ENCODE measurements at regions of chr10 and their contacts with region 1.

Region 1: DNA sequence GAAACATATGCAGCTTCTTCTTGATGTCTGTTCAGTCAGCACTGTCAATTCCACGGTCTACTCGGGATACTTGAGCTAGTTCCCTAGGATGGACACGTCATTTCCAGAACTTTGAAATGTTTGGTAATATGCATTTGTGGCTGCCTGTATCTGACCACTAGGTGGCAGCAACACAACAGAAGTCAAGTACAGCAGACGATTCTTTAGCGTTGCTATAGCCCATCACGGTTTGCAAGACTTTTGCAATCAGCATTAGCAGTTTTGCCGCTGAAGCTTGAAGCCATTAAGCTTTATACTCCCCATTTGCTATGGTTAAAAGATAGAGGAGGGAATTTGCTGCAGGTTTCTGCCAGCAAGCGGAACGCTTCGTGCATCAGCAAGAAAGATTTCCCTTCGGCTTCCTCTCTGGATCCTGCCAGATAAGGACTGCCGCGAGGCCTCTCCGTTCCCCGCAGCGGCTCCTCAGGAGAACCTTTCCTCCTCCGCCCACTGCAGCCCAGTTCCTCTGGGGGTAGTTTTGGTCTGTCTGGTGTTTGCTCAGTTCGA is 63.5 kb downstream of the ABCC2 start:
- DNase-seq: peak; percentile 93
- H3K4me3 ChIP-seq: peak overlapping the region; percentile 34; the same call in 1 of the 2 replicates
- H3K27ac ChIP-seq: peak overlapping the region; percentile 22
- H3K27me3 ChIP-seq: no peaks in the 10 kb centered on the region
- CTCF ChIP-seq: peak; percentile 95

Region 2: DNA sequence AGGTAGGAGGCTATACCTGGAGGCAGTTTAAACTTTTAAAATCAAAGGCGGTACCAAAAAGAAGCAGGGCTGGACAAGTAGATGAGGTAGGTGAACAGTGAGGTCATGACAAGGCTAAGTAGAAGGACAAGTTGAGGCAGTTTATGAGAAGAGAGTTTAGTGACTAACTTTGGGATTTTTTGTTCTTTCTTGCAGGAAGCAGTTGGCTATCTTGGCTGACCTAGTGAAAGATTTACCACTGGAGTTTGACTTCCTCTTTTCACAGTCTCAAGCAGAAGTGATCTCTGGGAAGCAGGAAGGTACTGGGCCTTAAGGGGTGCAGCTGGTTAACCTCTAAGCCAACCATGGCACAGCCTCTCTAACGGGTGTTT is 160.3 kb before region 1 on chr10:
- CTCF ChIA-PET with region 1: no interaction called
- POLR2A ChIA-PET with region 1: no interaction called
- DNase-seq: no peak
- H3K4me3 ChIP-seq: no peak overlapping the region
- H3K27ac ChIP-seq: no peak overlapping the region
- H3K27me3 ChIP-seq: no peaks in the 10 kb centered on the region
- CTCF ChIP-seq: no peak

Region 3: DNA sequence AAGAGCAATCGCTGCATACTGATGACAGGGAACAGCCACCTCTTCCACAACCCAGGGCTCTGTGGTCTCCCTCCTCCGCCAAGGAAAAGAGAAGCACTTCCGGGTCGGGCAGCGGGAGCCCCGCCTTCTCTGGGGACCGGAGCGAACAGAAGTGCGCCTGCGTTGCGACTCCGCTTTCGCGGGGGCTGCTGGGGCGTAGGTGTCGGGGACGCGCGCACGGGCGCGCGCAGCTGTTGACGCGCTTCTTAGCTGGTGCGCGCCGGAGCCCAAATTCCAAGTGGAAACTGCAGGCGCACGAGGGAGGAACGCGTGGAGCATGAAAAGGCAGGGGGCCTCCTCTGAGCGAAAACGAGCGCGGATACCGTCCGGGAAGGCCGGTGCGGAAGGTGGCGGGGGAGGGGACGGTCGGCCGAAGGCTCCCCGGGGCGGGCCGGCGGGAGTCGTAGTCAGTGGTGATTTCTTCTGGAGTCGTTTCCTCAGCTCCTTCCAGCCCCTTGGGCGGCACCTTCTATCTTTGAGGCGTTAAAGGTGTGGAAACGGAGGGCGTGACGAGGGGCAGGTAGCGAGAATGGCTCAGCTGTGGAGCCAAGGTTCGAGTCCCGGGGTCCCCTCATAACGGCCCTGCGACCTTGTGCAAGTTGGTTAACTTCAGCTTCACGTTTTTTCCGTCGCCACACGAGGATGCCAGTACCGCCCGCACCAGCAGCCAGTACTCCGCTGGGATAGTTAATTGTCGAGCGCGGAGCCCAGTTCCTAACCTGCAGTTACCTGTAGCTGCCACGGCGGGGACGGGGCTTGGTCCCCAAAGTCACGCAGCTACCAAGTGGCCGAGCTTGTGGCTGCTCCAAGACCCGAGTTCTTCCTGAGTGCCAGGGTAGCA is 113.6 kb before region 1 on chr10 and contains the starts of genes COX15 and CUTC:
- CTCF ChIA-PET with region 1: interaction called, 20 read pairs
- POLR2A ChIA-PET with region 1: interaction called, 3 read pairs
- DNase-seq: peak; percentile 93
- H3K4me3 ChIP-seq: peak within 1 kb of the TSS; percentile 98
- H3K27ac ChIP-seq: peak within 1 kb of the TSS; percentile 91
- H3K27me3 ChIP-seq: no peaks in the 10 kb centered on the region
- CTCF ChIP-seq: peak; percentile 34; the same call in 1 of the 2 replicates
- polyA plus RNA-seq, gene COX15: 26.1 and 32.2 TPM in 2 replicates
- polyA plus RNA-seq, gene CUTC: 13.9 and 18.0 TPM in 2 replicates

Region 4: DNA sequence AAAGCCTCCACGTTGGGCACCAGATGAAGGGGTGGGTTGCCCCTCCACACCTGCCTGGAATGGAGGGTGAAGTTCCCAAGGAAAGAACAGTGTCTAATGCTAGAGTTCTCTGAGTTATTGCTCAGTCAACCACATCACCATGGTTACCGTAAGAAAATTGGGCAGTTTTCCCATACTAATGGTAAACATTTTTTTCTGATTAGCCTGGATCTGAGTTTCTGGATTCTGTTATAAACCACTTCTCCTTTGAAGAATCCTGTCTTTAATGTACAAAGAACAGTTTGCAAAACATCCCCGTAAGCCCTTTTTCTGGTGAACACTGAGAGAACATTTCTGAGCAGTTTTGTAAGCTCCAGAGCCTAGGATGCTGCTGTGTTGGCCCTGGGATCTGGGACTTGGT is 18.0 kb before region 1 on chr10:
- CTCF ChIA-PET with region 1: interaction called, 22 read pairs
- POLR2A ChIA-PET with region 1: no interaction called
- DNase-seq: no peak
- H3K4me3 ChIP-seq: no peak overlapping the region
- H3K27ac ChIP-seq: no peak overlapping the region
- H3K27me3 ChIP-seq: no peaks in the 10 kb centered on the region
- CTCF ChIP-seq: no peak

Region 5: GRCh38 chr10:99966306-99966705 is 120.4 kb after region 1 on chr10:
- CTCF ChIA-PET with region 1: interaction called, 51 read pairs
- POLR2A ChIA-PET with region 1: interaction called, 4 read pairs
- DNase-seq: no peak
- H3K4me3 ChIP-seq: no peak overlapping the region
- H3K27ac ChIP-seq: no peak overlapping the region
- H3K27me3 ChIP-seq: no peaks in the 10 kb centered on the region
- CTCF ChIP-seq: no peak

Region 6: DNA sequence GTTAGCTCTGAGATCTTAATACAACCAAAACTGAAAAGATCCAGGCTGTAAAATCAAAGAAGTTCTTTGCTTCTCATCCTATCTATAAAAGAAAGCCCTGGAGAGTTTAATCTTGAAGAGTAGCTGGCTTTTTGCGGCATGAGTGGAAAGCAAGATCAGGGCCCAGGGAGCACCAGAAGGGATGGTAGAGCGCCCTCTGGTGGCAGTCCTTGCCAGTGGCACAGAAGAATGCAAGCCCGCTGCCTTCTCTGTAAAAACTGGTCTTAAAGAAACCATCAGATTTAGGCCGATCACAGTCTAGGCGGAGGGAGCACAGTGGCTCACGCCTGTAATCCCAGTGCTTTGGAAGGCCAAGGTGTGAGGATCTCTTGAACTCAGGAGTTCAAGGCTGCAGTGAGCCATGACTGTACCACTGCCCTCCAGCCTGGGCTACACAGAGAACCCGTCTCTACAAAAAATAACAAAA is 200.1 kb after region 1 on chr10:
- CTCF ChIA-PET with region 1: interaction called, 325 read pairs
- POLR2A ChIA-PET with region 1: interaction called, 4 read pairs
- DNase-seq: peak; percentile 68
- H3K4me3 ChIP-seq: no peak overlapping the region
- H3K27ac ChIP-seq: no peak overlapping the region
- H3K27me3 ChIP-seq: no peaks in the 10 kb centered on the region
- CTCF ChIP-seq: peak; percentile 97

Region 7: GRCh38 chr10:100072514-100072913 is 226.6 kb after region 1 on chr10:
- CTCF ChIA-PET with region 1: no interaction called
- POLR2A ChIA-PET with region 1: no interaction called
- DNase-seq: no peak
- H3K4me3 ChIP-seq: no peak overlapping the region
- H3K27ac ChIP-seq: no peak overlapping the region
- H3K27me3 ChIP-seq: peaks cover 15% of the 10 kb centered on the region
- CTCF ChIP-seq: no peak

Region 8: GRCh38 chr10:100201549-100201948 is 355.6 kb after region 1 on chr10:
- CTCF ChIA-PET with region 1: interaction called, 13 read pairs
- POLR2A ChIA-PET with region 1: no interaction called
- DNase-seq: no peak
- H3K4me3 ChIP-seq: no peak overlapping the region
- H3K27ac ChIP-seq: no peak overlapping the region
- H3K27me3 ChIP-seq: no peaks in the 10 kb centered on the region
- CTCF ChIP-seq: no peak

Measured in AG04450 (cell line).